CD8-positive, alpha-beta T cell (primary cell): ENCODE measurements at regions of chr17 and their contacts with region 1.

Region 1: DNA sequence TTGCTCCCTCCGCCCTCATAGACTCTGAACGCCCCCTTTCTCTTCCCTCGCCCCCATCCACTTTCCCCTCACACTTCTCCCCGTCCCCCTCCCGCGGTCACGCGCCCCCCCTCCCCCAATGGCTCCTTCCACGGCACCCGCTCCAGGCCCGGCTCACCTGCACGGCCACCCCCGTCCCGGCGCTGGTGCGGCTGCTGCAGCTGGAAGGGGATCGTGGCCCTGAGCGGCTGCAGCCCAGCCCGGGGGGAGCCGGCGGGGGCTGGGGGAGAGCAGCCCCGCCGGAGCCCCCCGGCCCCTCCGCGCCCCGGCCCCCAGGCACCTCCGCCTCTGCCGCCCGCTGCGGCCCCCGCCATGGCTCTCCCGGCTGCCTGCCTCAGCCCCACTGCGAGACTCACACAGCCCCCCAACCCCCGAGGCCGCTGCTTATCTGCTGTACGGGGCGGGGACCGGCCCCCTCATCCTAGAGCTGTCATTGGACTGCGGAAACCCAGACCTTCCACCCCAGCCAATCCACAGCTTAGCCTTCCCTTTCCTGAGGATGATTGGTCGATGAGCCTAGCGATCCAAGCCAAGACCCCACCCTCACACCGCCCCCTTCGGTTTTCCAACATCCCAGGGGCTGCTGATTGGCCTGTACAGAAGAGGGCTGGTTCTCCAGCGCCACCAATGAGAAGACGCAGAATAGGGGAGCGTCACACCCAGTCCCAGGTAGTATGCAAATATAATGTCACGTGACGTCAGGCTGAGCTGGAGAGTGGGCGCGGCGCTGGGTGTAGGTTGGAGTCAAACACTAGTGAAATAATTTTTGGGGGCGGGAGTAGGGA is at the start of gene FAM117A:
- DNase-seq: peak; percentile 90 to 99 (median 95)
- ATAC-seq: peak; percentile 84
- H3K4me3 ChIP-seq: peak within 1 kb of the TSS; percentile 67 to 68
- H3K4me3 Mint-ChIP-seq: peak within 1 kb of the TSS; percentile 93
- H3K27ac ChIP-seq: peak within 1 kb of the TSS; percentile 46 to 69
- H3K27ac Mint-ChIP-seq: peak within 1 kb of the TSS; percentile 91
- H3K4me1 ChIP-seq: peaks cover 43% of the 10 kb centered on the region
- H3K4me1 Mint-ChIP-seq: peaks cover 48% of the 10 kb centered on the region
- H3K27me3 ChIP-seq: no peaks in the 10 kb centered on the region
- H3K27me3 Mint-ChIP-seq: no peaks in the 10 kb centered on the region
- CTCF ChIP-seq: no peak
- total RNA-seq, gene FAM117A: 23.4 to 28.7 TPM

Region 2: GRCh38 chr17:49677933-49678847 is 85.8 kb before region 1 on chr17 and contains the start of gene SPOP:
- CTCF ChIA-PET with region 1: no interaction called
- POLR2A ChIA-PET with region 1: no interaction called
- intact Hi-C with region 1: loop called in 1 of 2 experiments (anchors 1 kb)
- DNase-seq: peak; percentile 97 to 100 (median 99)
- ATAC-seq: peak; percentile 94
- H3K4me3 ChIP-seq: peak within 1 kb of the TSS; percentile 76 to 81
- H3K4me3 Mint-ChIP-seq: peak within 1 kb of the TSS; percentile 97
- H3K27ac ChIP-seq: peak within 1 kb of the TSS; percentile 91 to 98
- H3K27ac Mint-ChIP-seq: peak within 1 kb of the TSS; percentile 100
- H3K4me1 ChIP-seq: peaks cover 29% of the 10 kb centered on the region
- H3K4me1 Mint-ChIP-seq: peaks cover 49% of the 10 kb centered on the region
- H3K27me3 ChIP-seq: no peaks in the 10 kb centered on the region
- H3K27me3 Mint-ChIP-seq: no peaks in the 10 kb centered on the region
- CTCF ChIP-seq: no peak
- total RNA-seq, gene SPOP: 30.5 to 34.3 TPM

Region 3: GRCh38 chr17:49739641-49740271 is 24.2 kb before region 1 on chr17:
- CTCF ChIA-PET with region 1: interaction called, 8 read pairs
- POLR2A ChIA-PET with region 1: interaction called, 99 read pairs
- intact Hi-C with region 1: loop called (anchors 1 kb)
- DNase-seq: peak; percentile 91 to 99 (median 98)
- ATAC-seq: peak; percentile 95
- H3K4me3 ChIP-seq: peak overlapping the region; percentile 42 to 54
- H3K4me3 Mint-ChIP-seq: peak overlapping the region; percentile 90
- H3K27ac ChIP-seq: peak overlapping the region; percentile 77 to 96
- H3K27ac Mint-ChIP-seq: peak overlapping the region; percentile 100
- H3K4me1 ChIP-seq: peaks cover 83% of the 10 kb centered on the region
- H3K4me1 Mint-ChIP-seq: peaks cover 87% of the 10 kb centered on the region
- H3K27me3 ChIP-seq: no peaks in the 10 kb centered on the region
- H3K27me3 Mint-ChIP-seq: no peaks in the 10 kb centered on the region
- CTCF ChIP-seq: no peak

Region 4: GRCh38 chr17:49779739-49780231 is 15.8 kb after region 1 on chr17:
- CTCF ChIA-PET with region 1: interaction called, 15 read pairs
- POLR2A ChIA-PET with region 1: interaction called, 4 read pairs
- intact Hi-C with region 1: no loop called
- DNase-seq: peak in 3 of 9 experiments; percentile 24 to 65 (median 55)
- ATAC-seq: no peak
- H3K4me3 ChIP-seq: no peak overlapping the region
- H3K4me3 Mint-ChIP-seq: no peak overlapping the region
- H3K27ac ChIP-seq: no peak overlapping the region
- H3K27ac Mint-ChIP-seq: no peak overlapping the region
- H3K4me1 ChIP-seq: no peaks in the 10 kb centered on the region
- H3K4me1 Mint-ChIP-seq: peaks cover 5% of the 10 kb centered on the region
- H3K27me3 ChIP-seq: no peaks in the 10 kb centered on the region
- H3K27me3 Mint-ChIP-seq: no peaks in the 10 kb centered on the region
- CTCF ChIP-seq: peak; percentile 24